ENCODE measurements at regions of chr16 and their contacts with region 1.

Region 1: GRCh38 chr16:69904495-69905170 is 46.5 kb upstream of the CLEC18A start:
- DNase-seq: no peak
- H3K4me3 ChIP-seq: no peak overlapping the region
- H3K4me3 Mint-ChIP-seq: no peak overlapping the region
- H3K27ac ChIP-seq: no peak overlapping the region
- H3K27ac Mint-ChIP-seq: peak overlapping the region in 1 of 8 donors; percentile 21
- H3K4me1 ChIP-seq: no peaks in the 10 kb centered on the region
- H3K4me1 Mint-ChIP-seq: no peaks in the 10 kb centered on the region
- H3K27me3 ChIP-seq: no peaks in the 10 kb centered on the region
- H3K27me3 Mint-ChIP-seq: no peaks in the 10 kb centered on the region

Region 2: GRCh38 chr16:69848637-69849545 is 55.7 kb before region 1 on chr16:
- CTCF ChIA-PET with region 1: no interaction called
- POLR2A ChIA-PET with region 1: no interaction called
- DNase-seq: no peak
- H3K4me3 ChIP-seq: no peak overlapping the region
- H3K4me3 Mint-ChIP-seq: no peak overlapping the region
- H3K27ac ChIP-seq: no peak overlapping the region
- H3K27ac Mint-ChIP-seq: peak overlapping the region in 2 of 8 donors; percentile 2 to 23
- H3K4me1 ChIP-seq: no peaks in the 10 kb centered on the region
- H3K4me1 Mint-ChIP-seq: peaks cover 3 to 12% (median 6%) of the 10 kb centered on the region in 3 donors
- H3K27me3 ChIP-seq: no peaks in the 10 kb centered on the region
- H3K27me3 Mint-ChIP-seq: no peaks in the 10 kb centered on the region

Region 3: GRCh38 chr16:69930117-69930776 is 25.6 kb after region 1 on chr16:
- CTCF ChIA-PET with region 1: interaction called, 14 read pairs
- POLR2A ChIA-PET with region 1: no interaction called
- DNase-seq: peak; percentile 19 to 61 (median 32)
- H3K4me3 ChIP-seq: no peak overlapping the region
- H3K4me3 Mint-ChIP-seq: no peak overlapping the region
- H3K27ac ChIP-seq: no peak overlapping the region
- H3K27ac Mint-ChIP-seq: peak overlapping the region in 1 of 8 donors; percentile 17
- H3K4me1 ChIP-seq: no peaks in the 10 kb centered on the region
- H3K4me1 Mint-ChIP-seq: no peaks in the 10 kb centered on the region
- H3K27me3 ChIP-seq: no peaks in the 10 kb centered on the region
- H3K27me3 Mint-ChIP-seq: no peaks in the 10 kb centered on the region

Measured in CD8-positive, alpha-beta memory T cell (primary cell).